CD8-positive, alpha-beta memory T cell (primary cell): ENCODE measurements at regions of chr1 and their contacts with region 1.

Region 1: DNA sequence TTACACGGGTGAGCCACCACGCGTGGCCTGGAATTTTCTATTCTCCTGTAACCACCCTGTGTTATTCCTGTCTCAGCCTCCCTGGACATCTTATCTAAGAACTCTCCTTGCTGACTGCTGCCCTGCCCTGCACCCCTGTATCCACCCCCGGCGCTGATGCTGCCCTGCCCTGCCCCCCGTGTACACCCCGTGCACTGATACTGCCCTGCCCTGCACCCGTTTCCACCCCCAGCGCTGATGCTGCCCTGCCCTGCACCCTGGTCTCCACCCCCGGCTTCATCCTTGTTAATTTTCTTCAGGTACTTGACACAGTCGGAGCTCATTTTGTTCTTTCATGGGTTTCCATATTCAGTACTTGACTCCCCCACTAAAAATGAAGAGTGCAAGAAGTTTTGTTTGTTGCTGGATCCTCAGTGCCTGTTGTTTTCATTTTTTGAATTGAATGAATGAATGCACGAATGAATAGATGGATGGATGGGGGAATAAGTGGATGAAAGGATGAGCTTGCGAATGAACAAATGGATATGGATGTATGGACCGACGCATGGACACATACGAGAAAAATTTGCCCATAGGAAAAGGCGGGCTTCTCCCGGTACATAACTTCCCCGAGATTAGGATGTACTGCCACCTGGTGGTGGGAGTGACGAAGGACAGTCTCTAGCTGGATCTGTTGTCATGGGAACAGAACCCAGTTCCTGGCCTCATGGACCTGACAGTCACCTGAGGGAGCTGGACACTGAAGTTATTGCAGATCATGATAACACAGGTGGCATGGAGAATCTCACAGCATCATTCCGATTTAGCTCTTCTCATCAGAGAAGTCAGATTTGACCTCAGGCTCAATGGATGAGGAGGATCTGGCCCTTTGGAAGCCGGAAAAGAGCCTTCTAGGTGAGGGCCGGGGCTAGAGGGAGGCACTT is 14.9 kb downstream of the AADACL4 start:
- DNase-seq: peak; percentile 55 to 81 (median 61)
- H3K4me3 ChIP-seq: no peak overlapping the region
- H3K4me3 Mint-ChIP-seq: peak overlapping the region in 1 of 7 donors; percentile 26
- H3K27ac ChIP-seq: no peak overlapping the region
- H3K27ac Mint-ChIP-seq: peak overlapping the region in 1 of 8 donors; percentile 68
- H3K4me1 ChIP-seq: peaks cover 5% of the 10 kb centered on the region
- H3K4me1 Mint-ChIP-seq: peaks cover 7% of the 10 kb centered on the region in 3 donors
- H3K27me3 ChIP-seq: no peaks in the 10 kb centered on the region
- H3K27me3 Mint-ChIP-seq: peaks cover 5 to 9% of the 10 kb centered on the region in 2 donors

Region 2: GRCh38 chr1:12272770-12273169 is 386.0 kb before region 1 on chr1:
- CTCF ChIA-PET with region 1: interaction called, 13 read pairs
- POLR2A ChIA-PET with region 1: no interaction called
- DNase-seq: no peak
- H3K4me3 ChIP-seq: no peak overlapping the region
- H3K4me3 Mint-ChIP-seq: no peak overlapping the region
- H3K27ac ChIP-seq: no peak overlapping the region
- H3K27ac Mint-ChIP-seq: no peak overlapping the region
- H3K4me1 ChIP-seq: no peaks in the 10 kb centered on the region
- H3K4me1 Mint-ChIP-seq: peaks cover 0 to 2% (median 0%) of the 10 kb centered on the region in 3 donors
- H3K27me3 ChIP-seq: no peaks in the 10 kb centered on the region
- H3K27me3 Mint-ChIP-seq: no peaks in the 10 kb centered on the region

Region 3: GRCh38 chr1:12314333-12314903 is 344.4 kb before region 1 on chr1:
- CTCF ChIA-PET with region 1: interaction called, 16 read pairs
- POLR2A ChIA-PET with region 1: no interaction called
- DNase-seq: peak in 1 of 5 donors; percentile 13
- H3K4me3 ChIP-seq: no peak overlapping the region
- H3K4me3 Mint-ChIP-seq: no peak overlapping the region
- H3K27ac ChIP-seq: no peak overlapping the region
- H3K27ac Mint-ChIP-seq: peak overlapping the region in 2 of 8 donors; percentile 3 to 6
- H3K4me1 ChIP-seq: no peaks in the 10 kb centered on the region
- H3K4me1 Mint-ChIP-seq: no peaks in the 10 kb centered on the region
- H3K27me3 ChIP-seq: no peaks in the 10 kb centered on the region
- H3K27me3 Mint-ChIP-seq: no peaks in the 10 kb centered on the region

Region 4: DNA sequence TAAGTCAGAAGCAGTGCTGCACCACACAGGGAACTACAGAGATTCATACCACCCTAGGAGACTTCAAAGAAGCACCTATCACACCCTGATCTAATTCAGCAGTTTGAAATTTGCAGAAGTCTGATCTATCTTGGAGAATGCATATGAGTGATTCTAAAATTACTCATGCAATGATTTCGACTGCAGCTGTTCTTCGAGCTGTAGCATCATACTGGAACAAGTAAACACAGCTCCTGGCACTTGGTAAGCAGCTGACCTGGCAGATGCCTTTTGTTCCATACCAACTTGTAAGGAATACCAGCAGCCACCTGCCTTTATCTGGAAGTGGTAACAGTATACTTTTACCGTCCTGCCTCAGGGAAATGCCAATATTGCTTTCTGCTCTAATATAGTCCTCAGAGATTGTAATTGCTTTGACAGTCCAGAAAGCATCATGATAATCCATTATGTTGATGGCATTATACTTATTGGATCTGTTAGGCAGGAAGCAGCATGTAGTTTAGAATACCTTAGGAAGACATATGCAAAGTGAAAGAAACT is 10.8 kb after region 1 on chr1:
- CTCF ChIA-PET with region 1: interaction called, 12 read pairs
- POLR2A ChIA-PET with region 1: no interaction called
- DNase-seq: no peak
- H3K4me3 ChIP-seq: no peak overlapping the region
- H3K4me3 Mint-ChIP-seq: no peak overlapping the region
- H3K27ac ChIP-seq: no peak overlapping the region
- H3K27ac Mint-ChIP-seq: peak overlapping the region in 1 of 8 donors; percentile 16
- H3K4me1 ChIP-seq: no peaks in the 10 kb centered on the region
- H3K4me1 Mint-ChIP-seq: no peaks in the 10 kb centered on the region
- H3K27me3 ChIP-seq: no peaks in the 10 kb centered on the region
- H3K27me3 Mint-ChIP-seq: peaks cover 13 to 24% of the 10 kb centered on the region in 2 donors